Caco-2 (cell line): ENCODE measurements at regions of chr13 and their contacts with region 1.

Region 1: GRCh38 chr13:32911506-32911905 is 104.7 kb upstream of the KL start:
- DNase-seq: peak; percentile 49 to 50
- H3K4me3 ChIP-seq: no peak overlapping the region
- H3K4me3 Mint-ChIP-seq: no peak overlapping the region
- H3K27ac Mint-ChIP-seq: no peak overlapping the region
- H3K4me1 ChIP-seq: no peaks in the 10 kb centered on the region
- H3K4me1 Mint-ChIP-seq: no peaks in the 10 kb centered on the region
- H3K27me3 ChIP-seq: no peaks in the 10 kb centered on the region
- H3K27me3 Mint-ChIP-seq: peaks cover 3% of the 10 kb centered on the region
- CTCF ChIP-seq: peak; percentile 45 to 64

Region 2: GRCh38 chr13:32791545-32792172 is 119.8 kb before region 1 on chr13:
- CTCF ChIA-PET with region 1: no interaction called
- POLR2A ChIA-PET with region 1: no interaction called
- intact Hi-C with region 1: loop called (anchors 2 kb)
- DNase-seq: no peak
- H3K4me3 ChIP-seq: no peak overlapping the region
- H3K4me3 Mint-ChIP-seq: no peak overlapping the region
- H3K27ac Mint-ChIP-seq: no peak overlapping the region
- H3K4me1 ChIP-seq: no peaks in the 10 kb centered on the region
- H3K4me1 Mint-ChIP-seq: peaks cover 9% of the 10 kb centered on the region
- H3K27me3 ChIP-seq: no peaks in the 10 kb centered on the region
- H3K27me3 Mint-ChIP-seq: no peaks in the 10 kb centered on the region
- CTCF ChIP-seq: no peak